ENCODE measurements at regions of chr5 and their contacts with region 1.

Region 1: DNA sequence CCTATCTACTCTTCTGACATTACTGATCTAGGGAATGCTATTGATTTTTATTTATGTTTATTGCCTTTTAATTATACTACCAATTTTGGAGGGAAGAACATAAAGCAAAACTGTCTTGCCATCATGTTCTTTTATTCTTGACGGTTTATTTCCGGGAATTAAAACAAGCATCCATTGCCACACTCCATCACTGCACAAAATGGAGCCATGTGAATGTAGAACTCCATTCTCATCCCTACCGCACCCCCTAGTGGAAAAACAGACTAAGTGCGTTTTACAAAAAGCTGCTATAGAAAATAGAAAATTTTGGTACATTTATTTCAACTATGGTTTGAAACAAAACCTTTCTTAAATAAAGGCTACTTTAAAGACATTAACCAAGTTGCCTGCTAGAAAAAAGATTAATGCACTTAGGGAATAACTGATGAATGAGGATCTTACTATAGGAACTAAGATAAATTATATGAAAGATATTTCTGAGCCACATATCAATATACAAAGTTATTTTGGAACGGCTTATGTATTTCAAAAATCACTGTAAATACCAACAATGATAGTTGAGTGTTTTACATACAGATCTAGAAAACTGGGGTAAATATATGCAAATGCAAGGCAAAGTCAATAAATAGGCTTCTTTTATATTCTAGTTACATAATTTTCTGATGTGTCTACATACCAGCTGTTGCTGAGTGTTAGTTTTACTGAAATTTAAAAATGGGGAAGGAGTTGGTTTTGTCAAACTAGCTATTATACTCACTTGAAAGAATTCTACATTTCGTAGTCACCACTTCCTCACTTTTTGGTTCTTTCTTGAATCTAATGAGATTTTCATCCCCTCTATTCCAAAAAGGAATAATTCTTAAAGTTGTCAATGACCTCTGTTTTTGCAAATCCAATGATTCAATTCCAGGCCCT is 26.5 kb downstream of the OXCT1 start:
- DNase-seq: peak; percentile 44
- ATAC-seq: peak; percentile 66
- H3K4me3 Mint-ChIP-seq: no peak overlapping the region
- H3K27ac Mint-ChIP-seq: no peak overlapping the region
- H3K4me1 Mint-ChIP-seq: peaks cover 5% of the 10 kb centered on the region
- H3K27me3 Mint-ChIP-seq: no peaks in the 10 kb centered on the region

Region 2: DNA sequence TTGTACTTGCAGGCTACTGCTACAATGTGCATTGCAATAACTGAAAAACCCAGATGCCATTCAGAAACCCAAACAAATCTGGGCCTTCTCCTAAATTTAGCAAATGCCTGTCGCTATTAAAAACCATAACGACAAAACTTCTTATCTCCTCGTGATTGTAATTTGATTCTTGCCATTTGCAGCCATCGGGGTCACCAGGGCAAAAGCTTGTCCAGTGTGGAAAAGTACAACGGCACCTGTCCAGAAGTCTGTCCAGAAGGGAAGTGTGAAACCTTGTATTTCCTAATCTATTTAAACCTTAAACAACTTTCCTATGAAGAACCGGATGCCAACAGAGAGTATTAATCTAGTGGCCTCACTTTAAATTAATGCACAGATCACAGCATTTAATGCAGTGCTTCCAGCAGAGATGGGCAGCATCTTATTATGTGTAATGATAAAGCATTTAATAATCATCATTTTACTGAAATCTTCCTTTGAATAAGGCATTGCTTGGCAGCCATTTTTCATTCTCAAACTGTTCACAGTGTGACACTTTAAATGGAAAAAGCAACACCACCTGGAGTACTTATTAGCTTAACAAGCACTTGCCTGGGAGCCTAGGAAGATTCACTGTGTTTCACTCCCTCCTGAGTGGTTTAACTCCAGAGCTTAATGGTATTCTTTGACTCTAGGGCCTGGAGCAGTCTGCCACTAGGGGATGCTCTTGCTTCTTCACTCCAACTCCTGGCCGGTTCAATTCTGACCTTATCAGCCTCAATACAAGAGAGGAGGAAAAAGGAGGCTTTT is 939.3 kb before region 1 on chr5:
- CTCF ChIA-PET with region 1: no interaction called
- POLR2A ChIA-PET with region 1: no interaction called
- intact Hi-C with region 1: loop called (anchors 1 to 10 kb)
- DNase-seq: peak; percentile 60
- ATAC-seq: peak; percentile 74
- H3K4me3 Mint-ChIP-seq: no peak overlapping the region
- H3K27ac Mint-ChIP-seq: no peak overlapping the region
- H3K4me1 Mint-ChIP-seq: no peaks in the 10 kb centered on the region
- H3K27me3 Mint-ChIP-seq: no peaks in the 10 kb centered on the region

Region 3: GRCh38 chr5:41695920-41696582 is 147.7 kb before region 1 on chr5:
- CTCF ChIA-PET with region 1: interaction called, 4 read pairs
- POLR2A ChIA-PET with region 1: no interaction called
- intact Hi-C with region 1: loop called (anchors 1 to 2 kb)
- DNase-seq: peak; percentile 7
- ATAC-seq: peak; percentile 42
- H3K4me3 Mint-ChIP-seq: no peak overlapping the region
- H3K27ac Mint-ChIP-seq: no peak overlapping the region
- H3K4me1 Mint-ChIP-seq: no peaks in the 10 kb centered on the region
- H3K27me3 Mint-ChIP-seq: peaks cover 14% of the 10 kb centered on the region

Region 4: DNA sequence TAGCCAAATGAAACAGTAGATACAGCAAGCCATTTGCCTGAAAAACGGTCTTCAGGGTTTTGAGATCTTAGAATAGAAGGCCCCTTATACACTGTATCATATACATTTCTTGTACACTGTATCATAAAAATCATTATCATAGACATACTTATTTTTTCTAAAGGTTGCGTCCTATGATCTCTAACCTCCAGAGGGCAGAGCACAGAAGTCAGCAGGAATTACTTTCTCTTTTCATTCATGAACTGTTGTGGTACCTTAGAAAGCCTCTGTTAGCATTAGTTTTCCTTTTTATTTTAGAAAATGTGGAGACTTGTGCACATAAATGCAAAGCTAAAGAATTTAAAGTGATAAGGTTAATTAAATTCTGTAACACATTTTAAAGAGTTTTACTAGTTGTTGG is 88.9 kb before region 1 on chr5:
- CTCF ChIA-PET with region 1: interaction called, 6 read pairs
- POLR2A ChIA-PET with region 1: no interaction called
- intact Hi-C with region 1: loop called in 1 of 2 experiments (anchors 5 kb)
- DNase-seq: no peak
- ATAC-seq: peak; percentile 55
- H3K4me3 Mint-ChIP-seq: no peak overlapping the region
- H3K27ac Mint-ChIP-seq: no peak overlapping the region
- H3K4me1 Mint-ChIP-seq: peaks cover 18% of the 10 kb centered on the region
- H3K27me3 Mint-ChIP-seq: no peaks in the 10 kb centered on the region

Region 5: GRCh38 chr5:41832430-41832829 is 11.3 kb before region 1 on chr5:
- CTCF ChIA-PET with region 1: interaction called, 15 read pairs
- POLR2A ChIA-PET with region 1: no interaction called
- intact Hi-C with region 1: no loop called
- DNase-seq: no peak
- ATAC-seq: no peak
- H3K4me3 Mint-ChIP-seq: no peak overlapping the region
- H3K27ac Mint-ChIP-seq: no peak overlapping the region
- H3K4me1 Mint-ChIP-seq: peaks cover 39% of the 10 kb centered on the region
- H3K27me3 Mint-ChIP-seq: no peaks in the 10 kb centered on the region

Measured in activated CD4-positive, alpha-beta T cell treated with anti-CD3 and anti-CD28 coated beads for 36 hours (primary cell).